ENCODE measurements at regions of chr1 and their contacts with region 1.

Region 1: DNA sequence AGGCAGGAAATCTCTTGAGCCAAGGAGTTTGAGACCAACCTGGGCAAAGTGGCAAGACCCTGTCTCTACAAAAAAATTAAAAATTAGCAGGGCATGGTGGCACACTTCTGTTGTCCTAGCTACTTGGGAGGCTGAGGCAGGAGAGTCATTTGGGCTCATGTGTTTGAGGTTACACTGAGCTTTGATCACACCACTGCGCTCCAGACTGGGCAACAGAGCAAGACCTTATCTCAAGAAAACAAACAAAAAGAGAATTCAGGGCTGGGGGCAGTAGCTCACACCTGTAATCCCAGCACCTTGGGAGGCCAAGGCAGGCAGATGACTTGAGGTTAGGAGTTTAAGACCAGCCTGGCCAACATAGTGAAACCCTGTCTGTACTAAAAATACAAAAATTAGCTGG is 17.8 kb upstream of the SLC16A1 start:
- DNase-seq: no peak
- ATAC-seq: no peak
- H3K4me3 ChIP-seq: no peak overlapping the region
- H3K4me3 Mint-ChIP-seq: no peak overlapping the region
- H3K27ac ChIP-seq: no peak overlapping the region
- H3K27ac Mint-ChIP-seq: no peak overlapping the region
- H3K4me1 ChIP-seq: no peaks in the 10 kb centered on the region
- H3K4me1 Mint-ChIP-seq: no peaks in the 10 kb centered on the region
- H3K27me3 ChIP-seq: no peaks in the 10 kb centered on the region
- H3K27me3 Mint-ChIP-seq: no peaks in the 10 kb centered on the region

Region 2: GRCh38 chr1:111884772-111885406 is 1088.9 kb before region 1 on chr1:
- CTCF ChIA-PET with region 1: interaction called in 1 of 2 experiments, 10 read pairs
- POLR2A ChIA-PET with region 1: no interaction called
- DNase-seq: no peak
- ATAC-seq: no peak
- H3K4me3 ChIP-seq: no peak overlapping the region
- H3K4me3 Mint-ChIP-seq: no peak overlapping the region
- H3K27ac ChIP-seq: no peak overlapping the region
- H3K27ac Mint-ChIP-seq: no peak overlapping the region
- H3K4me1 ChIP-seq: peaks cover 0 to 5% of the 10 kb centered on the region in 2 experiments
- H3K4me1 Mint-ChIP-seq: peaks cover 0 to 7% (median 0%) of the 10 kb centered on the region in 3 donors
- H3K27me3 ChIP-seq: peaks cover 4 to 47% of the 10 kb centered on the region in 2 experiments
- H3K27me3 Mint-ChIP-seq: peaks cover 47 to 49% of the 10 kb centered on the region in 2 donors

Region 3: GRCh38 chr1:112344754-112345423 is 628.9 kb before region 1 on chr1:
- CTCF ChIA-PET with region 1: no interaction called
- POLR2A ChIA-PET with region 1: no interaction called
- DNase-seq: peak in 24 of 35 experiments; percentile 4 to 60 (median 26)
- ATAC-seq: peak; percentile 79 to 98 (median 91)
- H3K4me3 ChIP-seq: no peak overlapping the region
- H3K4me3 Mint-ChIP-seq: peak overlapping the region in 1 of 3 donors; percentile 39
- H3K27ac ChIP-seq: no peak overlapping the region
- H3K27ac Mint-ChIP-seq: peak overlapping the region; percentile 53 to 59
- H3K4me1 ChIP-seq: peaks cover 11 to 14% of the 10 kb centered on the region in 2 experiments
- H3K4me1 Mint-ChIP-seq: peaks cover 19 to 22% (median 20%) of the 10 kb centered on the region in 3 donors
- H3K27me3 ChIP-seq: peaks cover 0 to 2% of the 10 kb centered on the region in 2 experiments
- H3K27me3 Mint-ChIP-seq: peaks cover 1 to 2% of the 10 kb centered on the region in 2 donors

Region 4: GRCh38 chr1:112625696-112626095 is 348.1 kb before region 1 on chr1:
- CTCF ChIA-PET with region 1: no interaction called
- POLR2A ChIA-PET with region 1: interaction called in 1 of 2 experiments, 12 read pairs
- DNase-seq: no peak
- ATAC-seq: no peak
- H3K4me3 ChIP-seq: no peak overlapping the region
- H3K4me3 Mint-ChIP-seq: peak overlapping the region in 1 of 3 donors; percentile 14
- H3K27ac ChIP-seq: no peak overlapping the region
- H3K27ac Mint-ChIP-seq: no peak overlapping the region
- H3K4me1 ChIP-seq: peaks cover 23 to 58% of the 10 kb centered on the region in 2 experiments
- H3K4me1 Mint-ChIP-seq: peaks cover 80 to 87% (median 85%) of the 10 kb centered on the region in 3 donors
- H3K27me3 ChIP-seq: no peaks in the 10 kb centered on the region
- H3K27me3 Mint-ChIP-seq: no peaks in the 10 kb centered on the region

Region 5: GRCh38 chr1:112925015-112925414 is 48.8 kb before region 1 on chr1:
- CTCF ChIA-PET with region 1: no interaction called
- POLR2A ChIA-PET with region 1: no interaction called
- DNase-seq: no peak
- ATAC-seq: no peak
- H3K4me3 ChIP-seq: no peak overlapping the region
- H3K4me3 Mint-ChIP-seq: no peak overlapping the region
- H3K27ac ChIP-seq: no peak overlapping the region
- H3K27ac Mint-ChIP-seq: no peak overlapping the region
- H3K4me1 ChIP-seq: no peaks in the 10 kb centered on the region
- H3K4me1 Mint-ChIP-seq: no peaks in the 10 kb centered on the region
- H3K27me3 ChIP-seq: no peaks in the 10 kb centered on the region
- H3K27me3 Mint-ChIP-seq: no peaks in the 10 kb centered on the region

Region 6: DNA sequence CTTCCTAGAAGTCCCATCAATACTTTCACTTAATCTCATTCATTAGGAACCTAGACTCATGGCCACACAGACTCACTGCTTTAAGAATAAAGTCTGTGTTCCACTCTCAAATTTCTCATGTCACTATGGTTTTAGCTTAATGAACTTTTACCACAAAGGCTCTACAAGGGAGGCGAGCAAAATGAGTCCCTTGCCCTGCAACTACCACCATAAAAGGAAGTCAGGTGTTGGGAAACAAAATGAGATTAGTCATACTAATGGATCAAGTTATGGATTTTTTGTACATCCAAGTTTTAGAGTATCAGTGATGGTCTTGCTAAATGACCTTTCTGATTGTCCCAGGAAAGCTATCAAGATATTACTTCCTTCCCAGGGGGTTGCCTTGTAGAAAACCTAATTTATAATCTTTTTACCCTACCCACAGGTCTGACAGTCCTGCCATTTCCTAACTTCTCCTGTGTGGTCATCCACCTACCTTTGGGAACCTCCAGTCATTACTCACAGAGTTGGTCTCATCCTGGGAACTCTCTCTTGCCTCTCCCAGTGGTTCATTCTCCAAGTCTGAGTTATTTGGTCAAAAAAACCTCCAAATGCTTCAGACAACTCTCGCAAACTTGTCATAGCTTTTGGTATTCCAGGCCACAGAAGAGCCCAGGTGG is 34.0 kb after region 1 on chr1:
- CTCF ChIA-PET with region 1: no interaction called
- POLR2A ChIA-PET with region 1: no interaction called
- DNase-seq: no peak
- ATAC-seq: no peak
- H3K4me3 ChIP-seq: no peak overlapping the region
- H3K4me3 Mint-ChIP-seq: no peak overlapping the region
- H3K27ac ChIP-seq: no peak overlapping the region
- H3K27ac Mint-ChIP-seq: no peak overlapping the region
- H3K4me1 ChIP-seq: no peaks in the 10 kb centered on the region
- H3K4me1 Mint-ChIP-seq: peaks cover 3 to 9% (median 5%) of the 10 kb centered on the region in 3 donors
- H3K27me3 ChIP-seq: no peaks in the 10 kb centered on the region
- H3K27me3 Mint-ChIP-seq: no peaks in the 10 kb centered on the region

Measured in T-cell (primary cell).